ENCODE measurements at regions of chr4 and their contacts with region 1.

Region 1: GRCh38 chr4:68498413-68499007 is 51.2 kb downstream of the TMPRSS11E start:
- DNase-seq: no peak
- ATAC-seq: no peak

Region 2: DNA sequence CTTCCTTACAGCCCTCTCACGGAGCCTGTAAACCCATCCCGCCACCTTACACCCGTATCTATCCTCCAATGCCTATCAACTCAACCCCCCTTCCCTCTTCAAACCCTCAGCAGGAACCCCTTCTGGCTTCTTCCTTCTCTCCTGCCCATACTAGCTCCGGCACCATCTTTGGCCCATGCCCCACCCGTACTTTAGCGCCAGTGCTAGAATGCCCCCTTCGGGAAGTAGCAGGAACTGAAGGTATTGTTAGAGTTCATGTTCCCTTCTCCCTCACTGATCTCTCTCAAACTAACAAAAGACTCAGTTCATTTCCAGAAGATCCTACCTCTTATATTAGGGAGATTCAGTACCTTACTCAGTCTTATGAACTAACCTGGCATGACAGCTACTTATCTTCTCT is 174.6 kb after region 1 on chr4:
- intact Hi-C with region 1: loop called (anchors 5 kb)
- DNase-seq: no peak
- ATAC-seq: no peak

Region 3: DNA sequence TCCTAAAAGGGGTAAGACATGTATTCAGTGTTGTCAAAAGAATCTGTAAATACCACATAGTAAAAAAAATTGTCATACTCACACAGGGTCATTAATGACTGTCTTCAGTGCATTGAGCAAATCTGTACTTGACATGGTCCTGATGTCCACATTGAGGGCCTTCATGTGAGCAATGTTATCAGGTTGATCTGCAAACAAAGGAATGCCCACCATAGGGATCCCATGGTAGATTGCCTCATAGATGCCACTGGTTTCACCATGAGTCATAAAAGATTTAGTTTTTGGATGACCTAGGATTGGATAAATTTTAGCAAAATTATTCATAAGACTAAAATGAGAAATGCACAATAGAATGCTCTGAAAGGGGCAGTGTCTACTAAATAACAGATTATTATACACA is 210.1 kb after region 1 on chr4:
- intact Hi-C with region 1: no loop called
- DNase-seq: no peak
- ATAC-seq: no peak

Region 4: GRCh38 chr4:69167300-69167699 is 668.8 kb after region 1 on chr4:
- intact Hi-C with region 1: loop called (anchors 5 kb)
- DNase-seq: no peak
- ATAC-seq: no peak